ENCODE measurements at regions of chr2 and their contacts with region 1.

Region 1: DNA sequence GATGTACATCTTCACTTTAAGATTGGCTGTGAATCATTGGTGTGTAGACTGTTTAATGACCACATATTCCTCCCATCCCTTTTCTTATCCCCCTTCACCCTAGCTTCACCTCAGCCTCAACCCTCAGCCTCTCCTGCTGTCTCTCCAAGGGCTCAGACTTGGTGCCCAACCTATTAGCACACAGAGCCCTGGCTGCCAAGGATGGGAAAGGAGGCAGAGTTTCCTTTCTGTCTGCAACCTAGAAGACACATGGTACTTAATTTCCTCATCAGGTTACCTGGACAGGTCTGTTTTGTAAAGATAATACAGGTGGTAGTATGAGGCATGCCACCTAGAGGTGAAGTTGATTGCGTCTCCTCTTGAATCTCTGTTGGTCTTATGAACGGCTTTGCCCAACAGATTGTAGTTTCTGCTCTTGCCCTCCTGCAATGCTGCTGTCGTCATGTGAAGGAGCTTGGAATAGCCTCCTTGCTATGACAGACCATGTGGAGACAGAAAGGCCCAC is 44.5 kb upstream of the RMND5A start:
- DNase-seq: no peak
- ATAC-seq: peak in 2 of 8 donors; percentile 19 to 31
- H3K4me3 ChIP-seq: no peak overlapping the region
- H3K27ac ChIP-seq: peak overlapping the region in 5 of 10 donors; percentile 48 to 68 (median 63)
- H3K4me1 ChIP-seq: peaks cover 2 to 29% (median 11%) of the 10 kb centered on the region in 9 donors
- H3K27me3 ChIP-seq: no peaks in the 10 kb centered on the region
- CTCF ChIP-seq: peak in 3 of 9 donors; percentile 7 to 16 (median 10)

Region 2: DNA sequence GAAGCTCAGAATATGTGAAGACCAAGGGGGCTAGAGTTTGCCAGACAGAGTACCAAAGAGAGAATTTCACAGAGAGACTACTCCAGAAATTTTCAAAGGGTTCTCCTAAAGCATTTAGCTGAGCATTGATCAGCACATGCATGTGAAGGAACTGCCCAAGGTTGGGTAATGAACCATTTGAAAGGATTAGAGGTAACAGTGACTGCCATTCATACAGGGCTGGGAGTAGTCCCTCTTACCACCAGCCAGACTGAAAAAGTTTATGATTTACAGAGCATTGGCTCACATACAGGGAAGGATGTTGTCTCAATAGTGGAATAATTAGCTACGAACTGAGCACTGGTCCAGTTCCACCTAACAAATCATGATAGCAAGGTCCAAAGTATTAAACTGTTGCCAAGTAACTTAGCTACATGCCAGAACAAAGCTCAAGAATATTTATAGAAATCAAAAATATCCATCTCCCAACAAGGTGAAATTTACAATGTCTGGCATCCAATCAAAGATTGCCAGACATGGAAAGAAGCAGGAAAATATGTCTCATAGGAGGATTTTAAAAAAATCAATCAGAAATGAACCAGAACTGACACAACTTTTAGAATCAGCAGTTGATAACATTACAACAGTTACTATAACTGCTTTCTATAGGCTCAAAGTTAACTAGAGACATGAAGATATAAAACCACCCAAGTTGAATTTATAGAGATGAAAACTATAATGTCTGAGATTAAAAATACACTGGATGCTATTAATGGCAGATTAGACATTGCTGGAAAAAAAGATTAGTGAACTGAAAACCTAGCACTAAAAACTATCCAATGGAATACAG is 26.2 kb before region 1 on chr2:
- intact Hi-C with region 1: loop called in 1 of 10 experiments (anchors 5 kb)
- DNase-seq: no peak
- ATAC-seq: no peak
- H3K4me3 ChIP-seq: no peak overlapping the region
- H3K27ac ChIP-seq: no peak overlapping the region
- H3K4me1 ChIP-seq: no peaks in the 10 kb centered on the region
- H3K27me3 ChIP-seq: no peaks in the 10 kb centered on the region
- CTCF ChIP-seq: no peak

Measured in heart right ventricle (tissue), 16 donors.